ENCODE measurements at regions of chr17 and their contacts with region 1.

Region 1: GRCh38 chr17:57833179-57833939 is 16.5 kb downstream of the MRPS23 start:
- DNase-seq: no peak
- ATAC-seq: peak; percentile 88

Region 2: GRCh38 chr17:57125406-57125805 is 708.0 kb before region 1 on chr17:
- intact Hi-C with region 1: loop called (anchors 5 kb)
- DNase-seq: no peak
- ATAC-seq: no peak

Region 3: DNA sequence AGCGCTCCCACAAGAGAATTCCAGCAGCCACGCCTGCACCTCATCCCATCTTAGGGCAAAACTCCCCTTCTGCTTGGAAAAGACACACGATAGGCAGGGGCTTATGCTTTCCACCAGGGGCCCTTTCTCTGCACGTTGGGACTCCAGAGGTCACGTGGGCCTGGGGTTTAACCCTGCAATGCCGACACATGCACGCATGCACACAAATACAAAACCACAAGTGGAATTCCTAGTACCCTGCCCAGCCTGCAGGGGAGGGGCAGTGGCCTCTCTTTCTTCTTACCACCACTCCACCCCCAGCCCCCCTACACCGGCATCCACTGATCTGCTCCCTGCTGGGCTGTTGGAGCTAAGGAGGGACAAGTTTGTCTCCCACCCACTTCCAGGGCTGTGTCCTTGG is 71.5 kb before region 1 on chr17:
- intact Hi-C with region 1: no loop called
- DNase-seq: no peak
- ATAC-seq: no peak

Region 4: DNA sequence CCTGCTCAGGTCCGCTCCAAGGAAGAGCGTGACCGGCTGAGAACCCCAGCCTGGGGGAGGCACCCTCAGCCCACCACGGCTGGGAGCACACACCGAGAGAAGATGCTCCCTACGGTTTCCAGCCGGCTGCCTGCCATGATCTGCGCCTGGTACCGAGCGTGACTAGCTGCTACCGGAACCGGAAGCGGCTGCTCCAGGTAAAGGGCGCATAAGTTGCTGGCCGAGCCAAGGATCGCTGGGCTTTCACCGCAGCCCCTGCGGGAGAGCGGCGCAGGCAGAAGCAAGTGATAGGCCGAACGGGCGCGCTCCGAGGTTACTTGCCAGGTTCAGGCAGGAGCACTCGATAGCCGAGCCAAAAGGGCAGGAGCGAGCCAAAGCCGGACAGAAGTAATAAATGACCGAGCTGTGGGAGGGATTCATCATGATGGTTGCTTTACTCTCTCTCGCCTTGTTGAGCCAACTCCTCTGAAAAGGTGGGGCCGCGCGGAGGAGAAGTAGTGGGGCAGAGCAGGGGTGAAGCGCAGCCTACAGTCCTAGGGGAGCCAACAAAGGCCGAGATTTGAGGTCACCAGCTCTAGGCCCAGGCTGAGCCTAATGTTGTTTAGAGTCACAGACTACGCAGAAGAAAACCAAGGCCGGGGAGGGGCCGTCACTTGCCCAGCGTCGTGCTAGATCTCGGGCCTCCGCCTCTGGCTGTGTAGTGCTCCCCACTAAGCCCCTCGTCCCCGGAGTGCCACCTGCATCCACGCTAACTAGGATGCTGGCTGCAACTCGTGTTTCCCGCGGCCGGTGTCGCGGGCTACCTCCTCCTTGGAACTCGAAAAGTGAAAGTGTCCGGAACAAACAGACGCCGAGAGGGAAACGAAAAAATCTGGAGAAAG is 16.8 kb after region 1 on chr17 and contains the start of gene MRPS23:
- intact Hi-C with region 1: loop called (anchors 2 kb)
- DNase-seq: peak; percentile 99
- ATAC-seq: peak; percentile 89
- total RNA-seq, gene MRPS23: 86.7 TPM

Region 5: DNA sequence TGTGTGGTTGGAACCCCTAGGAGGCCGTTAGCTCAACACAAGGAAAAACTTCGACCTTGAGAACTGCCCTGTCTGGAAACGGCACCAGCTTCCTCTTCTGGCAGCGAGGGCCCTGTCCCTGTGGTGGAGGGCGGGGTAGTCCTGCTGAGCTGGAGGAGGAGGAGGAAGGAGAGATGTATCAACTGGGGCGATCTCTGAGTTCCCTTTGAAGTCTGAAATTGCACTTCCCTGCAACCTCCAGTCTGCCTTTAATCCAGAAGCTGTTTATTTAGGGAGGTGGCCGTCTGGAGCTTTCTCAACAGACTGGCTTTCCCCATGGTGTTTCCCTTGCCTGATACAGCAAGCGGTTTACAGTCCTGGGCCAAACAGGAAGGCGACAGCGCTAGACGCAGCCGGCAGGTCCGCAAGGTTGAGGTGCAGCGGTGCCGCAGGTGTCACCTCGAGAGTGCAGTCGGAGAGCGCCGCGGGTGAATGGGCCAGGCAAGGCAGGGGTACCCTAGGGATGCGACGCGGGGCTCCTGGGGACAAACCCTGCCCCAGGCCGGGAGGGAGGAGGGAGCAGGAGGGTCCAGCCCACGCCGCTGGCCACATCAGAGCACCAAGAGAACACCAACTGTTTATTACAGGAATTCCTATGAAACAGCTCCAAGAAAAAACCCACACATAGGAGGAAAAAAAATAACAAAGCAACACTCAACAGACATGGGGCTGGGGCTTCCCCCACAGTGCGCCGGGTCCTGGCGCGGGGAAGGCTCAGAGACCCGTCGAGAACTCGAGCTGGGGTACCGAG is 27.8 kb after region 1 on chr17:
- intact Hi-C with region 1: no loop called
- DNase-seq: peak; percentile 85
- ATAC-seq: peak; percentile 55

Measured in Right ventricle myocardium inferior (tissue), 1 donor.